ENCODE measurements at regions of chr6 and their contacts with region 1.

Region 1: DNA sequence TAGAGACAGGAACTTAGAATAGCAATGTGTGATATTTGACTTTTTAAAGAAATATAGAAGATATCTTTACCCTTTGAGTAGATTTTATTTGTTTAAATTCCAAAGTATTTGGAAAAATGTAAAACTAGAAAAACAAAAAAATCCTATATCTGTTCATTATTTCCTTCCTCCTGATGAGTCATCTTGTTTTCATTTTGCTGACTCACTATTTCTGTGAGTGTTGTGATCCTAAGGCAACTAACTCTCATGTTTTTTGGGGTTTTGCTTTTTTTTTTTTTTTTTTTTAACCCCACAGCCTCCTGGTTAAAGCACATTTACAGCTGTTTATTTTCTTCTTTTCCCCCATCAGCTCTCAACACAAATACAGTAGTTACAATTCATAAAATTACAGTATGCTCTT is 37.8 kb upstream of the THEMIS start:
- DNase-seq: no peak
- ATAC-seq: no peak
- H3K4me3 Mint-ChIP-seq: peak overlapping the region; percentile 10
- H3K27ac Mint-ChIP-seq: peak overlapping the region; percentile 65
- H3K4me1 Mint-ChIP-seq: peaks cover 54% of the 10 kb centered on the region
- H3K27me3 Mint-ChIP-seq: no peaks in the 10 kb centered on the region

Region 2: GRCh38 chr6:127918506-127919427 is 19.9 kb before region 1 on chr6:
- CTCF ChIA-PET with region 1: interaction called, 18 read pairs
- POLR2A ChIA-PET with region 1: interaction called, 7 read pairs
- DNase-seq: peak; percentile 56
- ATAC-seq: peak; percentile 69
- H3K4me3 Mint-ChIP-seq: peak overlapping the region; percentile 71
- H3K27ac Mint-ChIP-seq: peak overlapping the region; percentile 85
- H3K4me1 Mint-ChIP-seq: peaks cover 85% of the 10 kb centered on the region
- H3K27me3 Mint-ChIP-seq: no peaks in the 10 kb centered on the region

Region 3: GRCh38 chr6:127951172-127951917 is 12.6 kb after region 1 on chr6:
- CTCF ChIA-PET with region 1: interaction called, 38 read pairs
- POLR2A ChIA-PET with region 1: interaction called, 11 read pairs
- DNase-seq: no peak
- ATAC-seq: peak; percentile 72
- H3K4me3 Mint-ChIP-seq: peak overlapping the region; percentile 55
- H3K27ac Mint-ChIP-seq: peak overlapping the region; percentile 94
- H3K4me1 Mint-ChIP-seq: peaks cover 74% of the 10 kb centered on the region
- H3K27me3 Mint-ChIP-seq: no peaks in the 10 kb centered on the region